ENCODE measurements at regions of chr16 and their contacts with region 1.

Region 1: DNA sequence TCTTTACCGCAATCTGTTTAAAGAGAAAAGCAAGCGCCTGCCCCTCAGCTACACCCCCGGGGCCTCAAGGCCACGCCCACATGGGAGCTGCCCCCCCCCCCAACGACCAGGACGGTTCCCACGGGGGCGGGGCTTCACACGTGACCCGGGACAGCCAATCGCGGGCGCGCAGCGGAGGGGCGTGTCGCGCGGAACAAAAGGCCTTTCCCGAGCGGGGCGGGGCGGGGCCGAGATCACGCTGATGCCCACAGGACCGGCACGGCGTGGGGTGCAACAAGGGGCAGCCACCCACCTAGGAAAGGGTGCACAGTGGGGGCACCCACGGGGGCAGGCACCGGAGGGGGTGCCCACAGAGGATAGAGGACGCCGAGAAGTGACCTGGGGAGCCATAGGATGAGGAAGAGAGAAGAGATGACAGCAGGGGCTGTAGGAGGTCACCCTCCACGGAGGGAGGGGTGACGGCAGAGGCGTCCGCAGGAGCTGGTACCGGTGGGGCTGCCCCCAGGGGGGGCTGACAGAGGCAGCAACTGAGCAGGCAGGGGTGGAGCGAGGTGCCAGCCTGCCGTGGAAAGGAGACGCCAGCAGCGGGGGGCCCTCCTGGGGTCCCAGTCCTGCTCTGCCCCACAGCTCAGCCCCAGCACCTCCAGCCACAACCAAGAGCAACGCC is 6.2 kb downstream of the UNKL start:
- DNase-seq: peak; percentile 96 to 97
- ATAC-seq: peak; percentile 92 to 98 (median 97)
- H3K4me3 ChIP-seq: peak overlapping the region; percentile 16 to 65 (median 56)
- H3K27ac ChIP-seq: peak overlapping the region in 9 of 10 donors; percentile 12 to 71 (median 55)
- H3K4me1 ChIP-seq: peaks cover 0 to 36% (median 24%) of the 10 kb centered on the region in 9 donors
- H3K27me3 ChIP-seq: no peaks in the 10 kb centered on the region
- CTCF ChIP-seq: no peak

Region 2: DNA sequence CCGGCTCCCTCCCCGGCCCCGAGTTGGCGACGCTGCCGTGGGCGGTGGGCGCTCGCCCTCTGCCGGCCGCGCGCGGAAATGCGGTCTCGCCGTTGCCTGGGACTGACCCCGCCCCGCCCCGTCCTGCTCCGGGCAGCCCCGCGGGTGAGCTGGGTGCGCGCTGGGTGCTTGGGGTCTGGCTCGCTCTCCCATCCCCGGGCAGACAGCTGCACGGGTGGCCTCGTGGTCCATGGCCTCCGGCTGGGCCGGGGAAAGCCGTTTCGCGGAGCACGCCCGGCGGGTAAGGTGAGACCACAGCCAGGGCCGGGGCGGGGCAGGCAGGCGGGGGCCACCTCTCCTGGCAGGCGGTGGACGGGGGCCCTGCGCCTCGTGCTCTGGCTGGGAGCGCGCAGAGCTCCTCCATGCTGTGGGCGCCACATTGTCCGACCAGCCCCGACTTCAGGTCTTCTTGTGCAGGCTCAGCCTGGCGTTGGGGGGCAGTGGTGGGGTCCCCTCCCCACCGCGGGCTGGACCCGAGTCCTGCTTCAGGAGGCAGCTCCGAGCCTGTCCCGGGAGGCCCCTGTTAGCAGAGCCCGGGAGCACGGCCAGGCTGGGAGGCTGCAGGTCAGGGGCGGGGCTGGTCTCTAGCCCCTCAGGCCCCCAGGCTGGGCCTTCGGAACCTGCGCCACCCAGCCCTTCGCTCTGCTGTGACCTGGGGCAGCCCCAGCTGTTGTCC is 305.2 kb before region 1 on chr16:
- intact Hi-C with region 1: no loop called
- DNase-seq: peak; percentile 31 to 73
- ATAC-seq: peak in 4 of 8 donors; percentile 30 to 47 (median 34)
- H3K4me3 ChIP-seq: peak overlapping the region in 6 of 10 donors; percentile 6 to 27 (median 24)
- H3K27ac ChIP-seq: no peak overlapping the region
- H3K4me1 ChIP-seq: peaks cover 8 to 18% (median 14%) of the 10 kb centered on the region in 9 donors
- H3K27me3 ChIP-seq: peaks cover 21 to 85% (median 66%) of the 10 kb centered on the region in 7 donors
- CTCF ChIP-seq: peak; percentile 50 to 72 (median 64)

Region 3: GRCh38 chr16:1342526-1343427 is 65.5 kb before region 1 on chr16:
- intact Hi-C with region 1: loop called in 1 of 10 experiments (anchors 10 kb)
- DNase-seq: peak; percentile 89
- ATAC-seq: peak; percentile 89 to 96 (median 94)
- H3K4me3 ChIP-seq: peak overlapping the region in 8 of 10 donors; percentile 6 to 44 (median 36)
- H3K27ac ChIP-seq: no peak overlapping the region
- H3K4me1 ChIP-seq: peaks cover 0 to 16% (median 5%) of the 10 kb centered on the region in 9 donors
- H3K27me3 ChIP-seq: no peaks in the 10 kb centered on the region
- CTCF ChIP-seq: no peak